AG04449 (cell line): ENCODE measurements at regions of chr12 and their contacts with region 1.

Region 1: GRCh38 chr12:52980693-52981423 is 25.4 kb upstream of the EIF4B start:
- DNase-seq: no peak
- H3K4me3 ChIP-seq: no peak overlapping the region
- CTCF ChIP-seq: peak; percentile 98

Region 2: GRCh38 chr12:52147367-52147972 is 833.4 kb before region 1 on chr12:
- CTCF ChIA-PET with region 1: interaction called, 13 read pairs
- POLR2A ChIA-PET with region 1: no interaction called
- DNase-seq: peak; percentile 92
- H3K4me3 ChIP-seq: no peak overlapping the region
- CTCF ChIP-seq: no peak

Region 3: GRCh38 chr12:52582971-52583456 is 397.8 kb before region 1 on chr12:
- CTCF ChIA-PET with region 1: interaction called, 21 read pairs
- POLR2A ChIA-PET with region 1: no interaction called
- DNase-seq: peak; percentile 4
- H3K4me3 ChIP-seq: no peak overlapping the region
- CTCF ChIP-seq: peak; percentile 82

Region 4: DNA sequence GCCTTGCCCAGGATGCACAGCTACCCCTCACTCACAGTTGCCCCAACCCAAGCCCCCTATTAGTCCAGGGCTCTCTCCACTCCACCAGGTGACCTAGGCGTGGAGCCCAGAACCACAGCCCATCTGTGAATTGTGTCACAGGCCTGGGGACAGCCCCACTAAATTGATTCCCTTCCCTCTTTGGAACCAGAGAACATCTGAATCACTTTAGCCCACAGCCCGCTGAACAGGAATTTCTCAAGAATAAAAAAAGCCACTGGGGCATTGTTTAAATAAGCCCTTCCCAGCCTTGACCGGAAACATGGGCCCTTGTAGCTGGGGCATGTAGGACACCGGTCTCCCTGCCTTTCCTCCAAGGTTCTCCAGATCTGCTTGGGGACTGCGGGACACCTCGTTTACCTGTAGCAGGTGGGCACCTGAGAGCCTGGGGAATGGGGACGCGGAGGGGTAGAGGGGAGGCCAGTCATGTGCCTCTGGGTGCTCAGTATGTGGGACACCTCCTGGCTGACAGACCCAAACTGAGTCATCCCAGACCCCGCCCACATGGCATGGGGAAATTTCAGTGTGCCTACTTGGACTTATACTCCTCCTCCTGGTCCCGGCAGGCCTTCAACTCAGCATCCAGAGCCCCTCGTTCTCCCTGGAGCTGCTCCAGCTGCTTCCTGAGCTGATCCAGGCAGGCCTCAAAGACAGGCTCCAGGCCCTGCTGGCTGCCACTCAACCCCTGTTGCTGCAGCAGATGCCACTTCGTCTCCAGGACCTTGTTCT is 133.3 kb before region 1 on chr12:
- CTCF ChIA-PET with region 1: no interaction called
- POLR2A ChIA-PET with region 1: no interaction called
- DNase-seq: no peak
- H3K4me3 ChIP-seq: no peak overlapping the region
- CTCF ChIP-seq: no peak

Region 5: DNA sequence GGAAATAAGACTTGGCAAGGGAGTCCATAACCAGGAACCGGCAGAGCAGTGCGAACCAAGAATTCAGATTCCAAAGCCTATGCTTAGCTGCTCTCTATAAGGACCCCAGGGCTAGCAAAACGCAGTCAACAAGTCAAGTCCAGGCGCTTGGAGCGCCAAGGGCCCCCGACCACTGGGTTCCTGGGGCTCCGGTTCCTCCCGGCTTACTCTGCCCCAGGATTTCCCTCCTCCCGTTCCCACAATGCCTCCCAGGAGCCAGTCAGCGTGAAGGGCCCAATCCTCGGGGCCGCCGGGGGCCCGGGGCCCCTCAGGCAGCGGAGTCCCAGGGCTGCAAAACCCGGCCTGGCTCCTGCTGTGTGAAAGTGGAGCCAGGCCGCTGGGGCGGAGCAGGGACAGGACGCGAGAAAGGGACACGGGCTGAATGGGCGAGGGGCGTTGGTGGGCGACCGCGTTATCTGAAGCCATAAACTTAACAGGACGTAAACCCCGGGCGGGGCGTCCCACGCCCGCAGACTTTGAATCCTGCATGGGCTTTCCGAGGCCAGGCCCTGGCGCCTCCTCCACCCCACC is 77.5 kb before region 1 on chr12:
- CTCF ChIA-PET with region 1: interaction called, 116 read pairs
- POLR2A ChIA-PET with region 1: no interaction called
- DNase-seq: no peak
- H3K4me3 ChIP-seq: peak overlapping the region; percentile 30
- CTCF ChIP-seq: no peak

Region 6: DNA sequence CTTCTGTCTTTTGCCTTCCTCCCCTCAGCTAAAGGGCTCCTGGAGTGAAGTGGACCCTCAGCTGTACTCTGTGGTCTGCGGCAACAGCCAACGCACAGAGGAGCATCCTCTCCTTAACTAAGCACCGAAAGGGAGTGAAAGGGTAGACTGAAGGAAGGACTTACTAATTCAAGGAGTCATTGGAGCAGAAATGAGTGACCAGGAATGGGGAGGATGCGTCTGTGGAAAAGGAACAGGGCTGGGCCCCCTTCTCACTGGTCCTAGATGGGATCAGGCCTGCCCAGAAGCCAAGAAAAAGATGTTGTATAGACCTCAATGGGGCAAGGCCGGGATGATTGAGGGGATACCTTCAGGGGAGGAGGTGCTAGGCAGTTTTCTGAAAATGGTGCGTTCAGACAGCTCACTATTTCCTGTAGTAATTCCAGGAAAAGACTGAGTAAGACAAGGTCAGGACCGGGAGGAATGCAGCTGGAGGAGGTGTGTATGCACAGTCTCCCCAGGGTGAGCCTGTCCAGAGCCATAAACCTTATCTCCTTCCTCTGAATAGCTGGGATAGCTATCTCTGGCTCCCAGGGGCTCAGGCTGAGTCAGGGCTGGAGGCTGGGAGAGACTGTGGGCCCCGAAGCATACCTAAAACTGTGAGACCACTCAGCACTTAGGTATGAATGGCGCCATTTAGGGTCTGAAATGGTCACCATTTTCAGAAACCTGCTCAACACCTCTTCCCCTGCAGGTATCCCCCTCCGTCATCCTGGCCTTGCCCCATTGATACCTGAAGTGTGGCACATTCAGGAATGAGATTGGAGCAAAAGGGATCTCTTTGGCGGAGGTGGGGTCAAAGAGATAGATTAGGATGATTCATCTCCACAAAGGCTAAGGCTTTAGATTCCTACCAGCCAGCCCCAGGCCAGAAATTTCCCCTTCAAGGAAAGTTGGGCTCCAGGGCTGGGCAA is 55.8 kb before region 1 on chr12:
- CTCF ChIA-PET with region 1: interaction called, 17 read pairs
- POLR2A ChIA-PET with region 1: no interaction called
- DNase-seq: peak; percentile 86
- H3K4me3 ChIP-seq: no peak overlapping the region
- CTCF ChIP-seq: no peak

Region 7: DNA sequence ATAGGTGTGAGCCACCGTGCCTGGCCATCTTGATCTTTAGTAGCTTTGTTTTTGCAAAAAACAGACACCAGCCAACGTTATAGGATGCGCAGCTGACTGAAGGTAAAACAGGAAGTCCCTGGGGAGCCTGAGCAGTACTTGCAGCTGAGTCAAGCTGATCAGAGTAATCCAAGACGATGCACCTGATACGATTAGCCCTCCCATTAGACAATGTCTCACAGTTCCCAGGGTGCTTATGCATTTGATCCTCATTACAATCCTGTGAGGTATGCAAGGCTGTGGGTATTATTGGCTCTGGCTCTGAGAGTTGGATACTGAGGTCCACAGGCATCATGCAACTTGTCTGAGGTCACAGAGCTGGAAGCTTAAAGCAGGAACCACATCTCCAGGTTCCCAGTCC is 23.9 kb before region 1 on chr12:
- CTCF ChIA-PET with region 1: interaction called, 21 read pairs
- POLR2A ChIA-PET with region 1: no interaction called
- DNase-seq: no peak
- H3K4me3 ChIP-seq: no peak overlapping the region
- CTCF ChIP-seq: no peak

Region 8: GRCh38 chr12:52992699-52993557 is 12.1 kb after region 1 on chr12:
- CTCF ChIA-PET with region 1: interaction called, 86 read pairs
- POLR2A ChIA-PET with region 1: interaction called, 3 read pairs
- DNase-seq: no peak
- H3K4me3 ChIP-seq: no peak overlapping the region
- CTCF ChIP-seq: no peak